Activated CD8-positive, alpha-beta memory T cell treated with anti-CD3 and anti-CD28 coated beads, Interleukin-2, amount 10 ng/mL, durations not matched to agents 7 days and 5 days (primary cell): ENCODE measurements at regions of chr6 and their contacts with region 1.

Region 1: DNA sequence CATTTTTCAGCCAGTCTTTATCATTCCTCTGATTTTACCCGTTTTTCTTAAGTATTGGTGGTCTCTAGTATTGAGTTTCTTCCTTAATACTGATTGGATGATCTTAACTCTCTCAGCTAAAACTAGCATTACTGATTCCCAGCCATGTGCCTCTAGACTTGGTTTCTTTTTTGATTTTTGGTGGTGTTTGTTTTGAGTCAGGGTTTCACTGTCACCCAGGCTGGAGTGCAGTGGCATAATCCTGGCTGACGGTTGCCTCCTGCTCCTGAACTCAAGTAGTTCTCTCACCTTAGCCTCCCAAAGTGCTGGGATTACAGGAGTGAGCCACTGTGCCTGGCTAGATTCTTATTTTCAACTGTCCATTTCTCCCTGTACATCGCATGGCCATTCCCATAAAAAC is 24.9 kb downstream of the DPPA5 start:
- DNase-seq: no peak
- ATAC-seq: peak; percentile 74
- H3K4me3 Mint-ChIP-seq: no peak overlapping the region
- H3K27ac Mint-ChIP-seq: no peak overlapping the region
- H3K4me1 Mint-ChIP-seq: peaks cover 10% of the 10 kb centered on the region
- H3K27me3 Mint-ChIP-seq: peaks cover 42% of the 10 kb centered on the region

Region 2: DNA sequence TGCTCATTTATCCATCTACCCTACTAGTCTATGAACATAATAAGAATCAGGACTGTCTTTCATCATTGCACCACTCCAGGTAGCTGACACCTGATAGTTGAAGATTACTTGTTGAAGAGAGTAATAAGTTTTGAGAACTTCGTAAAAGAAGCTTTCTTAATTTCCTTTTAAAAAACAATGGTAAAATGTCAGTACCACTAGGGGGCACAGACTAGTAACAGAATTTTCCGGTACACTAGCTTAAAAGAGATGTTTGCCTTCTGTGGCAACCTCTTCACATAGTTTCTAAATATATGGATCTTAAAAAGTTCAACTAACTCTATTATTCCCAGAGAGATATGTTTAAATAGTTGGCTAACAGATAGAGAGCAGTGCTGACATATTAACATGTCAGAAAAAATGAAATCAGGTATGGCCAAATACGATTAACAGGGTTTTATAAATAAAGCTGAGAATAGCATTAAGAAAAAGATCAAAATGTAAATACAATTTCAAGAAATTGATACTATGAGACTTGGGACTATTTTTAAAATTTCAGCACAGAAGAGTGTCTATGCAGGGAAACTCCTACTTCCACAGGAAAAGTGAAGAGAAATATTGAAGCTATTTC is 712.7 kb before region 1 on chr6:
- CTCF ChIA-PET with region 1: interaction called, 16 read pairs
- DNase-seq: no peak
- ATAC-seq: no peak
- H3K4me3 Mint-ChIP-seq: no peak overlapping the region
- H3K27ac Mint-ChIP-seq: no peak overlapping the region
- H3K4me1 Mint-ChIP-seq: peaks cover 29% of the 10 kb centered on the region
- H3K27me3 Mint-ChIP-seq: peaks cover 18% of the 10 kb centered on the region

Region 3: GRCh38 chr6:73285674-73286283 is 43.4 kb before region 1 on chr6:
- CTCF ChIA-PET with region 1: interaction called, 25 read pairs
- DNase-seq: no peak
- ATAC-seq: peak; percentile 30
- H3K4me3 Mint-ChIP-seq: no peak overlapping the region
- H3K27ac Mint-ChIP-seq: no peak overlapping the region
- H3K4me1 Mint-ChIP-seq: peaks cover 6% of the 10 kb centered on the region
- H3K27me3 Mint-ChIP-seq: no peaks in the 10 kb centered on the region

Region 4: GRCh38 chr6:73309769-73310502 is 19.3 kb before region 1 on chr6:
- CTCF ChIA-PET with region 1: interaction called, 20 read pairs
- DNase-seq: peak; percentile 75
- ATAC-seq: peak; percentile 95
- H3K4me3 Mint-ChIP-seq: peak overlapping the region; percentile 98
- H3K27ac Mint-ChIP-seq: peak overlapping the region; percentile 92
- H3K4me1 Mint-ChIP-seq: peaks cover 41% of the 10 kb centered on the region
- H3K27me3 Mint-ChIP-seq: peaks cover 32% of the 10 kb centered on the region

Region 5: DNA sequence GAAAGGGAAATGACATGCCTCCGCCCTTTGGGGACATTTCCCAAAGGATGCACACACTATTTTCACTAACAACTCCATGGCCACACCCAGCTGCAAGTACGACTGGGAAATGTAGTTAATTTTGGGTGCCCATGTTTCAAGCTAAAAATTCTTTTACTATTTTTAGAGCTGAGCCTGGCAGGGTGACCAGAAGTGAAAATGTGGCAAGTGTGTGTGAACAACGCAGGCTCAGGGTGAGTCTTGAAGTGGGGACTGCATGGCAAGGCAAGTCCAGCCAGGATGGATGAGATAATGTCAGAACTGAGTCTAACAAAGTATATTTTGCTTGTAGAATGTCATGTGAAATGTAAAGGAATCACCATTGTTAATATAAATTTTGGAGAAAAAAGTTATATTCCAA is 349.8 kb after region 1 on chr6:
- CTCF ChIA-PET with region 1: no interaction called
- DNase-seq: no peak
- ATAC-seq: no peak
- H3K4me3 Mint-ChIP-seq: no peak overlapping the region
- H3K27ac Mint-ChIP-seq: no peak overlapping the region
- H3K4me1 Mint-ChIP-seq: peaks cover 2% of the 10 kb centered on the region
- H3K27me3 Mint-ChIP-seq: peaks cover 35% of the 10 kb centered on the region